GM10248 (cell line): ENCODE measurements at regions of chr11 and their contacts with region 1.

Region 1: DNA sequence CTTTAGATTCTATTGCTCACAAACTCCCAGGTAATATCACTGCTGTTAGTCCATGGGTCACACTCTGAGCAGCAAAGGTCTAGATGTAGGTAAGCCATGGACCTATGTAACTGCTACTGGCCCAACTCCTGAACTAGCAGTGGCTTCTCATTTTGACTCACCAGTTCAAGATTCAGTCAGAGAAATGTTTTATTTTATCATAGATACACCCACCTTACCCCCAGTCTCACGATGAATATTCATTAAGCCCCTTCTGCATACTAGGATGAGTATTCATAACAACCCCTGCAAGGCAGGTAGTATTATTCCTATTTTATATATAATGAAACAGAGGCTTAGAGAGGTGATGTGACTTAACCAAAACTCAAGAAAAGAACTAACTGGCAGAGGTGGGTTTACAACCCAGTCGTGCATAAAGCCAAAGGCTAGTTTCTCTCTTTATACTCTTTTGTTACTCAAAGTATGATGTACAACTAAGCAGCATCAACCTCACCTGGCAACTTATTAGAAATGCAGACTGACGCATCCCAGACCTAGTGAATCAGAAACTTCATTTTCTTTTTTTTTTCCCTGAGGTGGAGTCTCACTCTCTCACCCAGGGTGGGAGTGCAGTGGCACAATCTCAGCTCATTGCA is 957.6 kb upstream of the CCDC90B start:
- DNase-seq: no peak
- CTCF ChIP-seq: no peak

Region 2: GRCh38 chr11:84255483-84255882 is 11.7 kb after region 1 on chr11:
- CTCF ChIA-PET with region 1: interaction called, 20 read pairs
- POLR2A ChIA-PET with region 1: no interaction called
- DNase-seq: no peak
- CTCF ChIP-seq: no peak